GM13976 (cell line): ENCODE measurements at regions of chr19 and their contacts with region 1.

Region 1: GRCh38 chr19:46404055-46404752 is 9.2 kb downstream of the CCDC8 start:
- DNase-seq: no peak
- CTCF ChIP-seq: no peak

Region 2: DNA sequence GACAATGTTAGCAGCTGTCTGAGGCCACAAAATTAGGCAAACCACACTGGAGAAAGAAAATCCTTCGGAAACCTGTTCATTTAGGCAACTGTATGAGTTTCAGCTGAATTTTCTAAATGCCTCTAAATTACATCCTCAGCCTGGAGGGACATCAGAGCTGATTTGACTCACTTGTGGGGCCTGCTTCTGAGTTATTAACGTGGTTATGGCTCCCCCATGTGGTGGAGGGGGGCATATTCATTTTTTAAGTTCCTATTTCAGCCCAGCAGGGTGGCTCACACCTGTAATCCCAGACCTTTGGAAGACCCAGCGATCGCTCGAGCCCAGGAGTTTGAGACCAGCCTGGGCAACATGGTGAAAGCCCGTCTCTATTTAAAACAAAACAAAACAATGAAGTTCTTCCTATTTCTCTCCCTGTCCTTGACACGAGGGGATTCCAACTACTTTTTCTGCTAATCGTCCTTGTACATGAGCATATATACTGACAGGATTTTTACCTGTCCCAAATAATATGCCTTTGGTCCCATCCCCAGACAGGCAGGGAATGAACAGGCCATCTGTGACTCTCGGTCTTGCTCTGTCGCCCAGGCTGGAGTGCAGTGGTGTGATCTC is 138.9 kb before region 1 on chr19:
- in situ Hi-C with region 1: no loop called
- DNase-seq: peak; percentile 75
- CTCF ChIP-seq: peak; percentile 65

Region 3: DNA sequence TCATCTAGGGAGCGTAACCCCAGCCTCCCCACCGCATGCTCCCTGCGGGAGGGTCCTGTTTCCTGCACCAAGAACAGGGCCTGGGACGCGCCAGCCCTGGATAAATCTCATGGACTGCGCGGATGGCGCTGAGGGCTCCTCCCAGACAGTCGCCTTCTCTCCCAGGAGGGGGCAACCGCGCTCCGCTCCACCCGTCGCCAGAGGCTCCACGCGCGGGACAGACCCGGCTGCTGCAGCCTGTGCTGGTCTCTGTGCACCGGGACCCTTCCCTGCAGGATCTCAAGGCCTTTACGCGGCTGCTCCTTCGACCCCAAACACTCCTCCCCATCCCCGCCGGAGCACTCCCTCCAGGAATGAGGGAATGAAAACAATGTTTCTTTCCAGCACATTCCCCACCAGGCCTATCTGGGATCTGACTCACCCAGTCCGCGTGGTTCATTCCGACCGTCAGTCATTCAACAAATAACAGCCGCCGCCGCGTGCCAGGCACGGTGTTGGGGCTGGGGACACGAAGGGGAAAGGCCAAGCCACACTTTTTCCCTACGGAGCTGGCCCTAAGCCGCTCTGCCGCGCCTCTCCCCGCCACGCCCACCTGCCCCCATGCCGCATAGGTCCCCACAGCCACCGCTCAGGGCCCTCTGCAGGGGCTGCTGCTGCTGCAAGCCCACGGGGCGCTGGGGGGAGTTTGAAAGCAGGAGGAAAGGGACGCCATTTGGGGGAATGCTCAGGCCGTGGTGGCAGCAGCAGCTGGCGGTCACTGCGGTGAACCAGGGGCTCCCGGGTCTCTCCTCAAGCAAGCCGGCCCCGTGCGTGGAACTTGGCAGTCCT is 85.5 kb after region 1 on chr19:
- in situ Hi-C with region 1: loop called (anchors 5 kb)
- DNase-seq: peak; percentile 48
- CTCF ChIP-seq: peak; percentile 0